Naive thymus-derived CD4-positive, alpha-beta T cell (primary cell): ENCODE measurements at regions of chr7 and their contacts with region 1.

Region 1: DNA sequence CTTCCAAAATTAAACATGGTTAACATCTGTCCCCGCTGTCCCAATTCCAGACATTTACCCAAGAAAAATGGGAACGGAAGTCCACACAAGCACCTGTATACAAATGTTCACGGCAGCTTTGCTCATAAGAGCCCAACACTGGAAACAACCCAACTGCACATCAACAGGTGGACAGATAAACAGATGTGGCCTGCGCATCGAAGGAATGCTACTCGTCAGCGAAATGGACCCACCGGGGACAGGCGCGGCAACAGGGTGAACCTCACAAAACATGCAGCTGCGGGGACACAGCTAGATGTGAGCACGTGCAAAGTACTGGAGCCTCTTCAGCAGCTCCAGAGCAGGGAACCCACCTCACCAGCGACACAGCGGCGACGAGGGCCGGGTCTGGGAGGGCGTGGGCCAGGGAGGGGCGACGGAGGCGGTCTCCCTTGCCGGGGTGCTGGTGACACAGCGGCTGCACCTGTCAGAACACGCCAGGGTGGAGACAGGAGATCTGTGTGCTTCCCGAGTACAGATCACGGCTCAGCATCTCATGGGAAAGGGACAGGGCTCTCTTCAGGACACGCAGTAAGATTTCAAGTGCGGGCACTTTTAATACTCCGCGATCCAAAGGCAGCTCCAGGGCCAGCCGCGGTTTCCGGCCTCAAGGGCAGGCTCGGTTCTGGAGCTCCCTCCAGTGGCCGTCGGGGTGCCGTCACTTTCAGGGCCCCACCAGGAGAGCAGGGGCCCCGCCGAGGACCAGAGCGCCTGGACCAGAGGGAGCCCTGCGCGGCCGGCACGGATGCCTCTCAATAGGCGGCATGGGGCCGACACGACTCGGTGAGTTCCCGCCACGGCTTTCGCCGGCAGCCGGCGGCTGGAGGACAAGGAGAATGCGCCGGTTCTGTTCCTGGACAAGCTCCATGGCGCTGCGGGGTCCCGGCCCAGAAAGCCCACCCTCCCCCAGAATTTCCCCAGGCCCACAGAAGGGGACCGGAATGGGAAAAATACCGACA is 21.2 kb downstream of the GPR146 start:
- DNase-seq: peak; percentile 66 to 87 (median 81)
- ATAC-seq: peak; percentile 96
- H3K4me3 ChIP-seq: peak overlapping the region; percentile 54
- H3K4me3 Mint-ChIP-seq: peak overlapping the region; percentile 62 to 83 (median 74)
- H3K27ac ChIP-seq: no peak overlapping the region
- H3K27ac Mint-ChIP-seq: peak overlapping the region in 2 of 9 donors; percentile 24 to 32
- H3K4me1 ChIP-seq: peaks cover 6 to 9% of the 10 kb centered on the region in 2 donors
- H3K4me1 Mint-ChIP-seq: peaks cover 6 to 16% (median 9%) of the 10 kb centered on the region in 7 donors
- H3K27me3 ChIP-seq: no peaks in the 10 kb centered on the region
- H3K27me3 Mint-ChIP-seq: peaks cover 0 to 3% (median 0%) of the 10 kb centered on the region in 5 donors

Region 2: GRCh38 chr7:909358-910329 is 155.9 kb before region 1 on chr7:
- CTCF ChIA-PET with region 1: interaction called, 4 read pairs
- POLR2A ChIA-PET with region 1: no interaction called
- intact Hi-C with region 1: loop called (anchors 1 kb)
- DNase-seq: peak in 3 of 9 donors; percentile 19 to 37 (median 29)
- ATAC-seq: peak; percentile 63
- H3K4me3 ChIP-seq: peak overlapping the region; percentile 9
- H3K4me3 Mint-ChIP-seq: peak overlapping the region in 9 of 10 donors; percentile 60 to 82 (median 77)
- H3K27ac ChIP-seq: no peak overlapping the region
- H3K27ac Mint-ChIP-seq: peak overlapping the region in 7 of 9 donors; percentile 28 to 80 (median 76)
- H3K4me1 ChIP-seq: peaks cover 0 to 11% of the 10 kb centered on the region in 2 donors
- H3K4me1 Mint-ChIP-seq: peaks cover 0 to 13% (median 10%) of the 10 kb centered on the region in 7 donors
- H3K27me3 ChIP-seq: no peaks in the 10 kb centered on the region
- H3K27me3 Mint-ChIP-seq: peaks cover 0 to 2% (median 0%) of the 10 kb centered on the region in 5 donors

Region 3: DNA sequence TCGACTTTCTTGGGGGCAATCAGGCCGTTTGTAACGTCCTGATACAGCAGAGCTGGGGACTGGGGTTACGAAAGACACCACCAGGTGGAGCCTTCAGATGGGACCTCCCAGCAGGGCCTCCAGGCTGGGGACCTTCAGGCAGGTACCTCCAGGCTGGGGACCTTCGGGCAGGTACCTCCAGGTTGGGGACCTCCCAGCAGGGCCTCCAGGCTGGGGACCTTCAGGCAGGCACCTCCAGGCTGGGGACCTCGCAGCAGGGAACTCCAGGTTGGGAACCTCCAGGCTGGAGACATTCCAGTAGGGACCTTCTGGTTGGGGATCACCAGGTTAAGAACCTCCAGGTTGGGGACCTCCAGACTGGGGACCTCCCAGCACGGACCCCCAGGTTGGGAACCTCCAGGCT is 44.7 kb before region 1 on chr7:
- CTCF ChIA-PET with region 1: interaction called, 10 read pairs
- POLR2A ChIA-PET with region 1: no interaction called
- intact Hi-C with region 1: loop called (anchors 1 to 2 kb)
- DNase-seq: no peak
- ATAC-seq: no peak
- H3K4me3 ChIP-seq: no peak overlapping the region
- H3K4me3 Mint-ChIP-seq: no peak overlapping the region
- H3K27ac ChIP-seq: no peak overlapping the region
- H3K27ac Mint-ChIP-seq: no peak overlapping the region
- H3K4me1 ChIP-seq: no peaks in the 10 kb centered on the region
- H3K4me1 Mint-ChIP-seq: peaks cover 6 to 31% (median 9%) of the 10 kb centered on the region in 7 donors
- H3K27me3 ChIP-seq: no peaks in the 10 kb centered on the region
- H3K27me3 Mint-ChIP-seq: no peaks in the 10 kb centered on the region

Region 4: DNA sequence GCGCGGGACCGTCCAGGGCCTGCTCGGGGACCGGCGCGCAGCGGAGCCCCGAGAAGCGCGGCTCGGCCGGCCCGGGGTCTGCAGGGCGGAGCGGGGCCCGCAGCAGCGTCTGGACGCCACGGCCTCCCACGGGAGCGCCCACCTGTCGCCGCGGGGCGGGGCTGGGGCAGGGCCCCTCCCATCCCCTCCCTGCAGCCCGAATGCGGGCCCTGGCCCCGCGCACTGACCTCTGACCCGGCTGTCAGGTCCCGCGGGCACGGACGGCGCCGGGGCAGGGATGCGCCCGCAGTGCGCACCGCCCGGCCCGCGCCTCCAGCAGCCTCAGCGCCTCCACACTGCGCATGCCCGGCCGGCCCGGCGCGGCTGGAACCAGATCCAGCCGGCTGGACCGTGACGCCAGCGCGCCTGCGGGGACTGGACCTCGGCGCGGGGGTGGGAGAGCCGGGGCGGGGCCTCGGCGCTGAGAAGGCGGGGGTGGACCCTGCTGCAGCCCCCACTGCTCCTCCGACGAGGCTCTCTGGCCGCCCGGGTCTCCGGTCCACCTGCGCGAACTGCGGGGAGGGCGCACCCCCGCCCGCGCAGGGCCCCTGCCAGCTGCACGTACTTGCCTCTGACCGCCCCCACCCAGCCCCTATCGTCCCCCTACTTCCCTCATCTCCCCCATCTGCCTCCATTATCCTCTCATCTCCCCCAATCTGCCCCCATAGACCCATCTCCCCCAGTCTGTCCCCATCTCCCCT is 37.4 kb before region 1 on chr7:
- CTCF ChIA-PET with region 1: interaction called, 8 read pairs
- POLR2A ChIA-PET with region 1: no interaction called
- intact Hi-C with region 1: loop called in 1 of 2 experiments (anchors 2 kb)
- DNase-seq: peak; percentile 50 to 94 (median 81)
- ATAC-seq: peak; percentile 83
- H3K4me3 ChIP-seq: peak overlapping the region; percentile 64
- H3K4me3 Mint-ChIP-seq: peak overlapping the region; percentile 72 to 90 (median 80)
- H3K27ac ChIP-seq: peak overlapping the region; percentile 80
- H3K27ac Mint-ChIP-seq: peak overlapping the region in 7 of 9 donors; percentile 56 to 92 (median 86)
- H3K4me1 ChIP-seq: peaks cover 20% of the 10 kb centered on the region in 2 donors
- H3K4me1 Mint-ChIP-seq: peaks cover 25 to 59% (median 44%) of the 10 kb centered on the region in 7 donors
- H3K27me3 ChIP-seq: no peaks in the 10 kb centered on the region
- H3K27me3 Mint-ChIP-seq: no peaks in the 10 kb centered on the region

Region 5: DNA sequence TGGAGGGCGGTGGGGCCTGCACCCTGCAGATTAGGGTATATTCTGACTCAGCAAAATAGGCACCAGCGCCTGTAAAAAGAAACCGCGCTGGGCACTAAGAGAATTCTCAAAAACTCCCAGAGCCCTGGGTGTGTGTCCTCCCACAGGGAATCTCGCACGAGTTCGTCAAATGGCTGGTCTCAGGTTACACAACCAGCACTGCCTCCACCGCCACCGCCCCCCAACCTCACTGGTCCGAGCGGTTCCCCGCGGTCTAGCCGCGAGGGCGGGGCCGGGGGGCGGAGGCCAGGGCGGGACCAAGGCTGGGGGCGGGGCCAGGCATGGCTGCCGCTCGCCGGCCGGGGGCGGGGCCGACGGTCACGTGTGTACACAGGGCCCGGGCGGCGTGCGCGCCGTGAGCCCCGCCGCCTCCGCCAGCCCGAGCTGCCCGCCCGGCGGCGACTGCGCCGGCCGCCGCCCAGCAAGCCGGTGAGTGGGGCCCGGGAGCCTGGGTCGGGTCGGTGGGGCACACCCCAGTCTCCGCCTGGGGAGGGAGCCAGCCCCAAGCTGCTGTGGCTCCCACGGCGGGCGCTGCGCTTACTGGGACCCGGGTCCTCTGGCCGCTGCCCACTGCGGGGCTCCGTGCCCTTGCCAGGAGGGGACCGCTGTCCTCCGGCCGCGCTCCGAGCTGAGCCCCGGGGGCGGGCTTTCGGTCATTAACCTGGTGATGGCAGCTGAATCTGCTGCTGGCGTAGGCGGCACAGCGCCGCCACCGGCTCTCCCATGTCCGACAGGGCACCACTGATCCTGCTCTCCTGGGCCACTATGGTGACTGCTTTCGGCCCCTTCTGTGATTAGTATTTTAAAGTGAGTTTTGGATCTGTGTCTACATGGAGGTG is 21.1 kb before region 1 on chr7 and contains the start of gene GPR146:
- CTCF ChIA-PET with region 1: interaction called, 16 read pairs
- POLR2A ChIA-PET with region 1: interaction called, 12 read pairs
- intact Hi-C with region 1: loop called in 1 of 2 experiments (anchors 1 kb)
- DNase-seq: peak; percentile 73 to 97 (median 86)
- ATAC-seq: peak; percentile 96
- H3K4me3 ChIP-seq: peak within 1 kb of the TSS; percentile 79
- H3K4me3 Mint-ChIP-seq: peak within 1 kb of the TSS; percentile 88 to 94 (median 91)
- H3K27ac ChIP-seq: peak within 1 kb of the TSS; percentile 83
- H3K27ac Mint-ChIP-seq: peak within 1 kb of the TSS; percentile 62 to 93 (median 85)
- H3K4me1 ChIP-seq: peaks cover 49 to 54% of the 10 kb centered on the region in 2 donors
- H3K4me1 Mint-ChIP-seq: peaks cover 42 to 75% (median 56%) of the 10 kb centered on the region in 7 donors
- H3K27me3 ChIP-seq: no peaks in the 10 kb centered on the region
- H3K27me3 Mint-ChIP-seq: peaks cover 0 to 13% (median 0%) of the 10 kb centered on the region in 5 donors
- total RNA-seq, gene GPR146: 10.1 to 26.5 (median 15.9) TPM

Region 6: GRCh38 chr7:1052031-1052818 is 13.3 kb before region 1 on chr7:
- CTCF ChIA-PET with region 1: interaction called, 15 read pairs
- POLR2A ChIA-PET with region 1: interaction called, 13 read pairs
- intact Hi-C with region 1: no loop called
- DNase-seq: no peak
- ATAC-seq: no peak
- H3K4me3 ChIP-seq: no peak overlapping the region
- H3K4me3 Mint-ChIP-seq: peak overlapping the region in 2 of 10 donors; percentile 25 to 64
- H3K27ac ChIP-seq: peak overlapping the region; percentile 4
- H3K27ac Mint-ChIP-seq: peak overlapping the region in 2 of 9 donors; percentile 73 to 82
- H3K4me1 ChIP-seq: peaks cover 15 to 53% of the 10 kb centered on the region in 2 donors
- H3K4me1 Mint-ChIP-seq: peaks cover 28 to 72% (median 60%) of the 10 kb centered on the region in 7 donors
- H3K27me3 ChIP-seq: no peaks in the 10 kb centered on the region
- H3K27me3 Mint-ChIP-seq: no peaks in the 10 kb centered on the region

Region 7: GRCh38 chr7:1081931-1082401 is 16.4 kb after region 1 on chr7:
- CTCF ChIA-PET with region 1: no interaction called
- POLR2A ChIA-PET with region 1: no interaction called
- intact Hi-C with region 1: no loop called
- DNase-seq: no peak
- ATAC-seq: no peak
- H3K4me3 ChIP-seq: no peak overlapping the region
- H3K4me3 Mint-ChIP-seq: no peak overlapping the region
- H3K27ac ChIP-seq: no peak overlapping the region
- H3K27ac Mint-ChIP-seq: no peak overlapping the region
- H3K4me1 ChIP-seq: peaks cover under 1 to 6% of the 10 kb centered on the region in 2 donors
- H3K4me1 Mint-ChIP-seq: peaks cover under 1 to 8% (median 5%) of the 10 kb centered on the region in 7 donors
- H3K27me3 ChIP-seq: no peaks in the 10 kb centered on the region
- H3K27me3 Mint-ChIP-seq: peaks cover 0 to under 1% (median 0%) of the 10 kb centered on the region in 5 donors

Region 8: GRCh38 chr7:1175967-1176851 is 110.6 kb after region 1 on chr7:
- CTCF ChIA-PET with region 1: no interaction called
- POLR2A ChIA-PET with region 1: no interaction called
- intact Hi-C with region 1: loop called in 1 of 2 experiments (anchors 2 kb)
- DNase-seq: peak; percentile 38 to 88 (median 64)
- ATAC-seq: peak; percentile 81
- H3K4me3 ChIP-seq: peak overlapping the region; percentile 47
- H3K4me3 Mint-ChIP-seq: peak overlapping the region in 8 of 10 donors; percentile 32 to 78 (median 53)
- H3K27ac ChIP-seq: no peak overlapping the region
- H3K27ac Mint-ChIP-seq: peak overlapping the region in 1 of 9 donors; percentile 42
- H3K4me1 ChIP-seq: peaks cover 6 to 10% of the 10 kb centered on the region in 2 donors
- H3K4me1 Mint-ChIP-seq: peaks cover 7 to 15% (median 11%) of the 10 kb centered on the region in 7 donors
- H3K27me3 ChIP-seq: no peaks in the 10 kb centered on the region
- H3K27me3 Mint-ChIP-seq: peaks cover 11 to 19% (median 18%) of the 10 kb centered on the region in 5 donors